Activated B cell treated with CpG ODN at 0.5 μM for 24 hours (primary cell): ENCODE measurements at regions of chr15 and their contacts with region 1.

Region 1: DNA sequence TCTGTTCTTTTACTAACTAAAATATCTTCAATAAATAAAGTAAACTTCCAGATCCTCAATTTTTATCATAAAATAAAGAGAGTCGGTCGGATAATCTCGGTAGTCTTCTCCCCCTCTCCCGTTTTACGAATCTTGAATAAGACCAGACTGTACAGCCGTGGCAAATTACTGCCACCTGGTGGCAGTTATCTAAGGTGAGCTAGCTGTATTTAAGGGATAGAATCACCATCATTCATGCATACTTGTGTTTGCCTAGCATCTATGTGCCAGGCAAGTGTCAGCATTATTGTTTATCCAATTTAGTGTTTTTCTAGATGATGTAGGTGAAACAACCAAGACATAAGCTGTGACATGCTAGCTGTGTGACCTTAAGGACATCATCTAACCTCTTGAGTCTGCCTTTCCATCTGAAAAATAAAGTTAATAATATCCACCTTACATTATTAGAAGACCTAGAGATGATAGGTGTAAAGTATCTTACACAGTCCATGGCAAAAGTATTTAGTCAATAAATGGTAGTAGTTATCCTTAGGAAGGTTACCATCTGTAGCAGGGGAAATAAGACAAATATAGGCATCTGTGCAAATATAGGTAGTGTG is 21.3 kb downstream of the DUT start:
- DNase-seq: no peak
- ATAC-seq: peak; percentile 77
- H3K4me3 Mint-ChIP-seq: no peak overlapping the region
- H3K27ac Mint-ChIP-seq: no peak overlapping the region
- H3K4me1 Mint-ChIP-seq: peaks cover 2% of the 10 kb centered on the region
- H3K27me3 Mint-ChIP-seq: no peaks in the 10 kb centered on the region
- CTCF ChIP-seq: peak; percentile 97

Region 2: GRCh38 chr15:47196057-47196456 is 1156.5 kb before region 1 on chr15:
- CTCF ChIA-PET with region 1: interaction called, 14 read pairs
- POLR2A ChIA-PET with region 1: no interaction called
- intact Hi-C with region 1: no loop called
- DNase-seq: no peak
- ATAC-seq: no peak
- H3K4me3 Mint-ChIP-seq: no peak overlapping the region
- H3K27ac Mint-ChIP-seq: no peak overlapping the region
- H3K4me1 Mint-ChIP-seq: no peaks in the 10 kb centered on the region
- H3K27me3 Mint-ChIP-seq: no peaks in the 10 kb centered on the region
- CTCF ChIP-seq: no peak

Region 3: DNA sequence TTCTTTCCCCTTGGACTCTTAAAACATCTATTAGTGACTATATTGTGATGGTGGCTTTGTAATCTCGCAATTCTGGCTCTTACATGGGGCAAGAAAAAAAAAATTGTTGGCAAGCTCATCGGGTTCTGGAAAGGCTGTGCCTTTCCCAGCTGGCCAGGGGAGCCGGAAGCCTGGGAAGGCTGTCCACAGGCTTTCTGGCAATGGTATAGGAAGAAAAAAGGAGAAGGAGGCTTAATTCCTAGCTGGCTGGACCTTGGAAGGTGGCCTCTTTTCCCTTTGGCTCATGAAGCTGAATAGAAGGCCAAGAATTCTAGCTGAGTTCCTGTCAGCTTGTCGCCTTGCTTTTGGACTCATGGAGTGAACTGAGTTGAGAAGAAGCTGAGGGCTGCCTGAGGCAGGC is 878.7 kb before region 1 on chr15:
- CTCF ChIA-PET with region 1: no interaction called
- POLR2A ChIA-PET with region 1: no interaction called
- intact Hi-C with region 1: loop called (anchors 5 kb)
- DNase-seq: no peak
- ATAC-seq: no peak
- H3K4me3 Mint-ChIP-seq: no peak overlapping the region
- H3K27ac Mint-ChIP-seq: no peak overlapping the region
- H3K4me1 Mint-ChIP-seq: no peaks in the 10 kb centered on the region
- H3K27me3 Mint-ChIP-seq: no peaks in the 10 kb centered on the region
- CTCF ChIP-seq: no peak

Region 4: GRCh38 chr15:47711654-47712053 is 640.9 kb before region 1 on chr15:
- CTCF ChIA-PET with region 1: no interaction called
- POLR2A ChIA-PET with region 1: no interaction called
- intact Hi-C with region 1: loop called (anchors 5 kb)
- DNase-seq: no peak
- ATAC-seq: no peak
- H3K4me3 Mint-ChIP-seq: no peak overlapping the region
- H3K27ac Mint-ChIP-seq: no peak overlapping the region
- H3K4me1 Mint-ChIP-seq: no peaks in the 10 kb centered on the region
- H3K27me3 Mint-ChIP-seq: peaks cover 21% of the 10 kb centered on the region
- CTCF ChIP-seq: no peak

Region 5: DNA sequence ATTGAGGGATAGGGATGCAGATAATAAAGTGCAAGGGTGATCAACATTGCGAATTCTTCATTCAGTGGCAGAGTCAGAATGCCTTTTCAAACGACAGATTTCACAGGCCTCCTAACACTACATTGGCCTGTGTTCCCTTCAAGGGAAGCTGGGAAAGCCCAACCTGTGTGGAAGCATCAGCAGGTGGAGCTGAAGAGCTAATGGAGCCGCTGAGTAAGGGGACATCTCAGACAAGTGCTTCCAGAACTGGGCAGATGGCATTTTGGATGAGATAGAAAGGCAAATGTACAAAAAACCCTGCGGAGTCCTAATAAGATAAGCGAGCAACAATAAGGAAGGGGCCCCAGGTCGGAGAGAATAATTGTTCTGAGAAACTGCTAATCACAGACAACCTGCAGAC is 240.3 kb before region 1 on chr15:
- CTCF ChIA-PET with region 1: interaction called, 5 read pairs
- POLR2A ChIA-PET with region 1: no interaction called
- intact Hi-C with region 1: loop called (anchors 5 kb)
- DNase-seq: no peak
- ATAC-seq: no peak
- H3K4me3 Mint-ChIP-seq: no peak overlapping the region
- H3K27ac Mint-ChIP-seq: no peak overlapping the region
- H3K4me1 Mint-ChIP-seq: no peaks in the 10 kb centered on the region
- H3K27me3 Mint-ChIP-seq: peaks cover 19% of the 10 kb centered on the region
- CTCF ChIP-seq: no peak

Region 6: DNA sequence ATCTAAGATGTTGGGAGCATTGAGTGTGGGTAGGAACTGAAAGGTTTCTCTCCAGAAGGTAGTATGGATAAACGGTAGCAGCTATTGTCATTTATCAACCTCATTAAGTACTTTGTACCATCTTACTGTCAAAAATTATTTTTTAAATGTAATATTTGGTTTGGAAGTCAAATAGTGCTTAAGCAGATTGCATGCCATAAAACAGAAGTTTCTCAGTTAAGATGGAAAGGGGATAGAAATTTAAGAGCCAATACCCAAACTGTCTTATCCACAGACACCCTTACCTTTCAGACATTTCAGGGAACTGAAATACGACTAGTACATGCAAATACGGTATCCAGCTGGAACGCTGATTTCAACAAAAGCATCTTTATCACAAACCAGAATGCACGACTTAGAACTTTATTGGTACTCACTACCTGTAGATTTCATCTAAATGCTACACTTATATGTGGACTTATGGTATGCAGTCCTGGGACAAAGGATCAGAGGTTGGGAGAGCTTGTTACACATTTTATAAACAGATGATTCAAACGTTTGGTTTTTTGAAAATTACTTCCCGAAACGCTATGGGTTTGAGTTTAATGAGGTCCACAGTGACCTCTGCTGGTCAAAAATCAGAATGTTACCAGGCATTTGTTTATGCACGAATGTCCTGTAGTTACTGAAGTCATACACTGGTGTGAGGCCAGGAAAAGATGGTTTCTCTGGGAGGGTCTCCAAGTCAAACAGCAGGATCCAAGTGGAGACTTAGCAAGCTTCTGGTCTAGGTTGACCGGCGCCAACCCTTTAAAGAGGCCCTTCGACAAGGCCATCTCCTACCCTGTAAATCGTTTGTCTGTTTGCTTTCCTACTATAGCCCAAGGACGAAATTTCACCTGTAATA is 67.0 kb before region 1 on chr15:
- CTCF ChIA-PET with region 1: interaction called, 6 read pairs
- POLR2A ChIA-PET with region 1: no interaction called
- intact Hi-C with region 1: loop called (anchors 1 kb)
- DNase-seq: no peak
- ATAC-seq: peak; percentile 28
- H3K4me3 Mint-ChIP-seq: no peak overlapping the region
- H3K27ac Mint-ChIP-seq: no peak overlapping the region
- H3K4me1 Mint-ChIP-seq: peaks cover 6% of the 10 kb centered on the region
- H3K27me3 Mint-ChIP-seq: peaks cover 4% of the 10 kb centered on the region
- CTCF ChIP-seq: peak; percentile 69

Region 7: DNA sequence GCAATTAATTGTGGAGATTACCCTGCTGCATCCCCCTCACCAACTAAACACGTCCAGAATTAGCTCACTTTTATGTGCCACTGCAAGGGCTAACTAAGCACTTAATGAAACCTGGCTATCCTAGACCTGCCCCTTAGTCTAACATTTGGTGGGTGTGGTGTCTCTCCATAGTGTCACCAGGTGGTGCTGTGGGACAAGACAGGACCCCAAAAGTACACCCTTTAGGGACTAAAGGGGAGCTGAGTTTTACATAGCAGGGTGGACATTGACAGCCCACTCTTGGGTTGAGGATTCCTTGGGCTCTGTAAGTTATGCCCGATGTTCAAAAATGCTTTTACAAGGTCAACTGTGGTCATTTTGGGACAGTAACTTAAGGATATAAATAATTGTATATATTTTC is 15.6 kb before region 1 on chr15:
- CTCF ChIA-PET with region 1: interaction called, 23 read pairs
- POLR2A ChIA-PET with region 1: no interaction called
- intact Hi-C with region 1: loop called (anchors 1 kb)
- DNase-seq: no peak
- ATAC-seq: no peak
- H3K4me3 Mint-ChIP-seq: no peak overlapping the region
- H3K27ac Mint-ChIP-seq: no peak overlapping the region
- H3K4me1 Mint-ChIP-seq: peaks cover 13% of the 10 kb centered on the region
- H3K27me3 Mint-ChIP-seq: no peaks in the 10 kb centered on the region
- CTCF ChIP-seq: no peak

Region 8: DNA sequence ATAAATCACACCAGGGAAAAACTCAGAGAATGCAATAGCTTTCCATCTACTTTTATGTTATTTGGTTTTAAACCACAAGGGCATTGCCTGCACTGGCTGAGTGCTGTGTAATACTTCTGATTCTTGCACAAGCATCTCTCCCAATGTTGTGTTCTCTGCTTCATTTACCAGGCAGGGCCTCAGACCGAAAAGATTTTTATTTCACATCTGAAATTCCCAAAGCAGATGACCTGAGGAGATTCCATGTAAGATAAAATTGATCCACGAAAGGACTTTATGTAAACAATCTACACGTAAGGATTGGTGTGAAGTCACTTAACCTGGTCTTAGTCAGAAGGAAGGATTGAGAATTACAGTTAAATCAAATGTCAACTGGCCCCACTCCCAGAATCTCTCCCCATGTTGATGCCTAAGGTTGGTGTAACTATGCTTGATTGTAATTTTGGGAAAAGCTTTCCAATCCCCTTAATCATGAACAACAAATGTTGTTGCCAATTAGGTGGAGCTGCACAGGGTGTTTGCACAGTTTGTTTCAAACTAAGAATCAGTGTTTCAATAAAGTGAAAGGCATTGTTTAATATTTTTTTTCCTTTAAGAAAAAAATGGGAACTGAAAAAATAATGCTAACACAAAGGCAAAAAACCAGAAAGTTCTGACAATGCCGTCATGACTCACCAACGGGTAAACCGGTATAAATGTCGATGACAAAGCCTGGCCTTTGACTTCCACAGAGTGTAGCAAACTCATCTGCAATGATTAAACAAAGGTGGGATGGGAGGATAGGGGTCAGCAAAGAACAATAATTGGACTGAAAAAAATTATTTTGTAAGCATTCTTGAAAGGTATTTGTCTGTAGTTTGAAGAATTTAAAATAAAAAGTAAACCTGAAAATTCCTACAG is 107.2 kb after region 1 on chr15:
- CTCF ChIA-PET with region 1: no interaction called
- POLR2A ChIA-PET with region 1: no interaction called
- intact Hi-C with region 1: no loop called
- DNase-seq: no peak
- ATAC-seq: no peak
- H3K4me3 Mint-ChIP-seq: no peak overlapping the region
- H3K27ac Mint-ChIP-seq: no peak overlapping the region
- H3K4me1 Mint-ChIP-seq: no peaks in the 10 kb centered on the region
- H3K27me3 Mint-ChIP-seq: no peaks in the 10 kb centered on the region
- CTCF ChIP-seq: no peak